Activated CD8-positive, alpha-beta T cell treated with anti-CD3 and anti-CD28 coated beads, Interleukin-2, amount 10 ng/mL, durations not matched to agents 7 days and 5 days (primary cell): ENCODE measurements at regions of chr6 and their contacts with region 1.

Region 1: DNA sequence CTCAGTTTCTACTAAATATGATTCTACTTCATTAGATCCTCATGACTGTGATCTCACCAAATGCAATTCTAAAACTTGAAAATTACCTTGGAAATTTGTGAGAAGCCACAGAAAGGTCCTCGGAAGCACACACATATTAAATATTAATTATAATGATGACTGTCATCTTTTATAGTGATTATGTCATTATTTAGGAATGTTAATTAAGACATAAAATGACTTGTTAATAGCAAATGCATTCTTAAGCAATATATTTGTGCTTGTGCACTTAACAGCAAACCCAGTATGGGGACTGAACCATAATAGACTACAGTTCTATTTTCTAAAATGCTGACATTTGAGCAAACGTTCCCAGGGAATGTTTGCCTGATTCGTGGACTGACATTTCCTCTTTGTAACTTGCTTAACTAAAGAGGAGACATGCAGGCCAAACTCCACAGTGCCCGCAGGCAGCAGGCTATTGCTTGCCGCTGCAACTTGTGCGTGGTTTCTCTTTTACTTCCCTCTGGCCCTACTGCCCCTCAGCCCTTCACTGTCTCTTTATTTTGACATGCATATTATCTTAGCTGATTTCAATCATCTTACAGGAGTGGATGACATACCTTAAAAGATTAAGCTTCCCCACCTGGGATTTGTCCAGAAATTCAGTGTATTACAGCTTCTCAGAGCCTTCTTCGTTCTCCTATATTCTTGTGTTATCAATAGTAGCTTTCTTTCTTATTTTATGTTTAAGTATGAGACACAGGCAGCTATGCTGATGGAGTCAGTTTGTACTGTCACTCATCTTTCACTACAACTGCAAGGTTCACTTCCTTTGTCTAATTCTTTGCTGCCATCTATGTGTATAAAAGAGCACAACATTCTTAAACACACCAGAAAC is 141.5 kb downstream of the GMDS start:
- DNase-seq: no peak
- ATAC-seq: peak; percentile 57
- H3K4me3 Mint-ChIP-seq: no peak overlapping the region
- H3K27ac Mint-ChIP-seq: no peak overlapping the region
- H3K4me1 Mint-ChIP-seq: no peaks in the 10 kb centered on the region
- H3K27me3 Mint-ChIP-seq: no peaks in the 10 kb centered on the region

Region 2: GRCh38 chr6:1437553-1438406 is 666.1 kb before region 1 on chr6:
- CTCF ChIA-PET with region 1: no interaction called
- POLR2A ChIA-PET with region 1: no interaction called
- DNase-seq: no peak
- ATAC-seq: no peak
- H3K4me3 Mint-ChIP-seq: no peak overlapping the region
- H3K27ac Mint-ChIP-seq: no peak overlapping the region
- H3K4me1 Mint-ChIP-seq: no peaks in the 10 kb centered on the region
- H3K27me3 Mint-ChIP-seq: peaks cover 15% of the 10 kb centered on the region

Region 3: GRCh38 chr6:1609041-1609647 is 494.7 kb before region 1 on chr6:
- CTCF ChIA-PET with region 1: interaction called, 19 read pairs
- POLR2A ChIA-PET with region 1: no interaction called
- DNase-seq: no peak
- ATAC-seq: no peak
- H3K4me3 Mint-ChIP-seq: peak overlapping the region; percentile 42
- H3K27ac Mint-ChIP-seq: no peak overlapping the region
- H3K4me1 Mint-ChIP-seq: peaks cover 38% of the 10 kb centered on the region
- H3K27me3 Mint-ChIP-seq: peaks cover 60% of the 10 kb centered on the region

Region 4: DNA sequence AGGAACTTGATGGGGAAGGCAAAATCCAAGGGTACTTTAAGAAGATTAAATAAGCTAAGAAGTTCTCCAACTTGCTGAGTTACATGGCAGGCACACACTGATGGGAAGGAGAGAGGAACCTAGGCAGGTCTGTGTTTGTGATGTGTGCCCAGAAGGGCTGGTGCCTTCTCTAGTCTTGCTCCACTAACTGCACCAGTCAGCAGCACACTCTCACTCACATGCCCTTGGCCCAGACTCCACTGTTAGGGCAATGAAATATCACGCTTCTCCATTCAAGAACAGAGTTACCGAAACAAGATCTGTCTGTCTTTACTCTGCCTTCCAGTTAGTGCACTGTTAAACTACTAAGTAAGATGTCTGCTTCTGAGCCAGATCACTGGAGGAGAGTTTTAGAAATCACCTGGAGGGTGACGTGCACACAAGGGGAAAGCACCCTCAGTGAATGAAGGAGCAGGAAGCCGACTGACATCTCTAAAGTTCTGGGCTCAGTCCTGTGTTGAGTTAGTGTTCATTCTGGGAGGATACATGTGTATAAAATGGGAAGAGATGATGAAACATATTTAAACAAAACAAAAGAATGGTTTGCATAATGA is 243.0 kb before region 1 on chr6:
- CTCF ChIA-PET with region 1: no interaction called
- POLR2A ChIA-PET with region 1: no interaction called
- DNase-seq: no peak
- ATAC-seq: no peak
- H3K4me3 Mint-ChIP-seq: no peak overlapping the region
- H3K27ac Mint-ChIP-seq: no peak overlapping the region
- H3K4me1 Mint-ChIP-seq: no peaks in the 10 kb centered on the region
- H3K27me3 Mint-ChIP-seq: no peaks in the 10 kb centered on the region